Adrenal gland (tissue), 19 donors: ENCODE measurements at regions of chr12 and their contacts with region 1.

Region 1: DNA sequence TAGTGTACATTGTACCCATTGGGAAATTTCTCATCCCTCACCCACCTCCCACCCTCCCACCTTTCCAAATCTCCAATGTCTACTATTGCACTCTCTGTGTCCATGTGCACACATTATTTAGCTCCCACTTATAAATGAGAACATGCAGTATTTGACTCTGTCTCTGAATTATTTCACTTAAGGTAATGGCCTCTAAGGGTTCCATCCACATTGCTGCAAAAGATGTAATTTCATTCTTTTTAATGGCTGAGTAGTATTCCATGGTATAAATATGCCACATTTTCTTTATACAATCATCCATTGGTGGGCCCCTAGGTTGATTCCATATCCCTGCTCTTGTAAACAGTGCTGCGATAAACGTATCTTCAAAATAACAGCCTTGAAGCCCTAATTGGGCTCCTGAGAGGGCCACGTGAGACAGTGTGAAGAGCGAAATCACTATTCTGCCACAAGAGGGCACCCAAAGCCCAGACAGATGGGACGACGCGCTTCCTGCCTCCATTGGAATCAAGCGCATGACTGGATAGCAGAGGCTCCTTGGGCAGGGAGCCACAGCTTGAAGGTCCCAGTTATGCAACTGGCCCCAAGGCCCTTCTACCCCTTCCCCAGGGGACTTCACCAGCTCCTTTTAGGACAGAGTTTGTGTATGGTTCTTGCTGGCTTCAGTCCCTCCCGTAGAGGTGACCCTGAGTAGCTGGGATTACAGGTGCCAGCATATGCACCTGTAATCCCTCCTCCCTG is 21.3 kb upstream of the CD27 start:
- DNase-seq: peak; percentile 86 to 96 (median 93)
- H3K4me3 ChIP-seq: no peak overlapping the region
- H3K27ac ChIP-seq: peak overlapping the region in 4 of 5 donors; percentile 35 to 76 (median 68)
- H3K4me1 ChIP-seq: peaks cover 10 to 11% of the 10 kb centered on the region in 2 donors
- H3K27me3 ChIP-seq: no peaks in the 10 kb centered on the region
- CTCF ChIP-seq: peak; percentile 76 to 97 (median 94)
- POLR2A ChIP-seq: no peak

Region 2: GRCh38 chr12:6215932-6216494 is 207.4 kb before region 1 on chr12:
- intact Hi-C with region 1: no loop called
- DNase-seq: peak; percentile 89 to 97 (median 96)
- H3K4me3 ChIP-seq: no peak overlapping the region
- H3K27ac ChIP-seq: peak overlapping the region; percentile 19 to 91 (median 78)
- H3K4me1 ChIP-seq: peaks cover 42 to 69% of the 10 kb centered on the region in 2 donors
- H3K27me3 ChIP-seq: no peaks in the 10 kb centered on the region
- CTCF ChIP-seq: no peak
- POLR2A ChIP-seq: peak in 1 of 2 donors; percentile 53

Region 3: DNA sequence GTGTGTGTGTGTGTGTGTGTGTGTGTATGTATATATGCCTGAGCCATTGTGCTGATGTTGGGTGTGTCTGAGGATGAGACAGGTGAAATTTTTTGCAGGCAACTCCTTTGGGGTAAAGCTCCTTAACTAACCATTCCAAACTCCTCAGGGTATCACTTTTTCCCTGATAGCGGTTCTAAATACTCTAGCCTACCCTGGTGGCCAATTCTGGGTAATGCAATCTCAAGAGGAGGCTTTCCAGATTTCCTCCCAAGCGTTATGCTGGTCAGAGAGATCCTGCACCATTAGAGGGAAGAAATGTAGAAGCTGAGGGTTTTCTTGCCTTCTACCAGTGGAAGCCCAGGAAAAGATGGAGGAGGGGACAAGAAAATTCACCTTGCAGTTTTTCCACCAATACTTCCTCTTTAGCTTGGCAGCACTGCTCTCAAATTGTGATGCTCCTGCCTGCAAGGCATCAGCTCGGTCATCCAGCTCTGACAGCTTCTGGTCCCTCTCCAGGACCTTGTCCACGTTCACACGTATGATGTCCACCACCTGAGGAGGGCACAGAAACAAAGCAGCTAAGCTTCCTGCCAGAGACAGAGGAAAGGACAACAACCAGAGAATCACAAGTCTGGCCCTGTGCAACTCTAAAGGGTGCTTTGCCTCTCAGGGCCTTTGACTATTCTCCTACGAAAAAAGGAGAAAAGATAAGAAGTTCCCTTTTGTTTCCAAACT is 42.2 kb after region 1 on chr12:
- intact Hi-C with region 1: loop called (anchors 5 kb)
- DNase-seq: peak; percentile 44 to 78 (median 59)
- H3K4me3 ChIP-seq: no peak overlapping the region
- H3K27ac ChIP-seq: no peak overlapping the region
- H3K4me1 ChIP-seq: peaks cover 15 to 22% of the 10 kb centered on the region in 2 donors
- H3K27me3 ChIP-seq: no peaks in the 10 kb centered on the region
- CTCF ChIP-seq: peak; percentile 80 to 98 (median 90)
- POLR2A ChIP-seq: no peak

Region 4: GRCh38 chr12:6533923-6534694 is 110.7 kb after region 1 on chr12 and contains the start of gene GAPDH:
- intact Hi-C with region 1: loop called (anchors 2 to 10 kb)
- DNase-seq: peak; percentile 93 to 97 (median 95)
- H3K4me3 ChIP-seq: peak within 1 kb of the TSS; percentile 52 to 90 (median 78)
- H3K27ac ChIP-seq: peak within 1 kb of the TSS; percentile 90 to 99 (median 95)
- H3K4me1 ChIP-seq: peaks cover 38 to 45% of the 10 kb centered on the region in 2 donors
- H3K27me3 ChIP-seq: no peaks in the 10 kb centered on the region
- CTCF ChIP-seq: peak in 1 of 6 experiments; percentile 20
- POLR2A ChIP-seq: peak; percentile 97 to 98
- total RNA-seq, gene GAPDH: 1,734 to 3,241 (median 2,275) TPM